Activated naive CD8-positive, alpha-beta T cell treated with anti-CD3 and anti-CD28 coated beads, Interleukin-2, amount 10 ng/mL, durations not matched to agents 7 days and 5 days (primary cell): ENCODE measurements at regions of chr11 and their contacts with region 1.

Region 1: DNA sequence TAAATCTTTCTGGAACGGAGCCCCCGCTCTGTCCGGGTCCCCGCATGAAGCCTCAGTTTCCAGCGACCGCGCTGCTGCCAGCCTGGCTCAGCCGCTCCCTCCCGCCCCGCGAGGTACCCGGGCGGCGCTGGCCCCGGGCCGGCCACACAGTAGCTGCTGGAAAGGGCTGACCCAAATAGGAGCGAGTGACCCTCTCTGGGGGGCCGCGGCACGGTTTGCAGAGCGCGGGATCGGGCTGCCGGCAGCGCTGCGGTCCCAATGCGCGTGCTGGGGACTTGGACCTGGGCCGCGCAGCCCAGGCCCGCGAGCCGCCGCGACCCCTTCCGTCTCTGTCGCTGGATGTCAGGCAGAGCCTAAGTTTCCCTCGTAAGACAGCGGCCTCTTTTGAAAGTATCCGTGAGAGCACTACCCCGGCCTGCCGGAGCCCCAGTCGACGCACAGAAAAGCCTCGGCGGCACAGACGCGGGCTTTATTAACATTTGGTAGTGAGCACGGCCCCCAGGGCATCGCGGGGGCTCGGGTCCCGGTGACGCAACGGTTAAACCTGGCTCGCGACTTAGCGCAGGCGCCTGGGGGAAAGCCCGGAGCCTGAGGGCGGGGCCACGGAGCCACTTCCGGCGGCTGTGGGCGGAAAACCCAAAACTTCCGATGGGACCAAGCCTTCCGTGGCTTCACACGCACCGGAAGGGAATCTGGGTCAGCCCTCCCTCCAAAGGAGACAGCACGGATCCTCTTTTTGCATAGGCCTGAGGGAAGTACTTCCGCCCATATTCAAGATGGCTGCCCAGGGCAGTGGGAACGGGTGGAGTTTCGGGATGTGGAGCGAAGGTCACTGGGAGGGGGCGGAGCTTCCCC is 14.9 kb downstream of the BAD start:
- DNase-seq: peak; percentile 99
- ATAC-seq: peak; percentile 69
- H3K4me3 Mint-ChIP-seq: peak overlapping the region; percentile 96
- H3K27ac Mint-ChIP-seq: peak overlapping the region; percentile 96
- H3K4me1 Mint-ChIP-seq: peaks cover 23% of the 10 kb centered on the region
- H3K27me3 Mint-ChIP-seq: no peaks in the 10 kb centered on the region

Region 2: DNA sequence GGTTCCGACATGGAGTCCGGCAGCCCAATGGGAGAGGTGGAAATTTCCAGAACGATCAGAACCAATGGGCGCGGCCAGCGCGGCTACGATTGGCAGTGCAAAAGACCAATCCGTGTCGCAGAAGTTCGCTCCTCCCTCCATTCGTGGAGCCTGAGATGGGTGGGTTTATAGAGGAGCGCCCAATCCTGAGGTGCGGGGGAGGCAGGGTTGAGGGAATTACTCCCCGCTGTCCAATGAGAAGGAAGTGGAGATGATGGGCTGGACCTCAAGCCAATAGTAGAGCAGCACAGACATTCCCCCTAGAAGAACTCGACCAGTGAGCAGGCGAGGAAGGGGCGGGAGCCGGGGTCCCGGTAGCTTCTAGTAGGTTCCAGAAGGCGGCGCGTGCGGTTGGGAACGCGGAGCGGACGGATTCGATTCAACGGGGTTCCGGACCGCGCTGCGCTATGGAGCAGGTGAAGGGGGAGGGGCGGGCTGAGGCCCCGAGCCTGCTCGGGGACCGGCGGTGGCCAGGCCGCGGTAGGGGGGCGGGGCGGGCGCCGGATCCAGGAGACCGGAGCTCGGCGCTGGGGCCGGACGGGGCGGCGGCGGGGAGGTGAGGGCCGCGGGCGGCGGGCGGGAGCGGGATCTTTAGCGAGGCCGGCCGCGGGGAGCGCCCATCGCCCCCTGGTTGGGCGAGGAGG is 83.7 kb before region 1 on chr11 and contains the start of gene STIP1:
- POLR2A ChIA-PET with region 1: interaction called, 38 read pairs
- DNase-seq: peak; percentile 95
- ATAC-seq: peak; percentile 92
- H3K4me3 Mint-ChIP-seq: peak within 1 kb of the TSS; percentile 99
- H3K27ac Mint-ChIP-seq: peak within 1 kb of the TSS; percentile 100
- H3K4me1 Mint-ChIP-seq: peaks cover 38% of the 10 kb centered on the region
- H3K27me3 Mint-ChIP-seq: no peaks in the 10 kb centered on the region
- total RNA-seq, gene STIP1: 218 to 219 TPM

Region 3: DNA sequence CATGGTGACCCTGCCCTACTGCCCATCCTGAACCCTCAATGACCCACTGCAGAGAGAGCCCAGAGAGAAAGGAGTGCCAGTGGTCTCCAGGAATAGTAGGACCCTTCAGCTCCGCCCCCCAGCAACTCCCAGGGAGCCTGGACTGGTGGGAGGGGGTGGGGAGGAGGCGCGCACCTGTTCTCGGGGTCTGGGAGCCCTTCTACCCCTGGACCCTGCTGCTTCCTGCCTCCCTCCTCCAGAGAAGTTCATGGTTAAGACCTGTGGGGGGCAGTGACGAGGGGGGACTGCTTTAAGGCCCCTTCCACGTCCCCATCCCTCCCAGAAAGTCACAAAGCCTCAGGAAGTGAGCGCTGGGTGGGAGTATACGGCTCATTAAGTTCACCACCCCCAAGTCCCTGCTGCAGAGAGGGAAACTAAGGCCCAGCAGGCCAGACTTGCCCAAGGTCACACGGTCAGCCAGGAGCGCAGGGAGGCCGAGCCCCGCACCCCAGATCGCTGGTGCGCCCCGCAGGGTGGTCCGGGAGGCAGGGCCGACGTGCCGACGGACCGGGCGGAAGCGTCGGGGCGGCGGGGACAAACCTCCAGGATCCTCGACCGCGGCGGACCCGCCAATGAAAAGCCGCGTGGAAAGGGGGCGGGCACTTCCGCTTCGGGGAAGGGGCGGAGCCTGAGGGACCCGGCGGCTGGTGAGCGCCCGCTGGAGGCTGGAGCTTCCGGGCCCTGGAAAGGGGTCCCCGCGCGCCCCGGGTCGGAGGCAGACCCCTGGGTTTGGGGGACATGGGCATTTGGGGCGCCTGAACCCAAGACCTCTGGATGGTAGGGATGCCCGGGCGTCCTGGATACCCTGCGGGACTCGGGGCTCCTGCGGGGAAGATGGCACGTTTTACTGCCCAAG is 43.7 kb before region 1 on chr11 and contains the starts of genes NUDT22 and TRPT1:
- POLR2A ChIA-PET with region 1: interaction called, 21 read pairs
- DNase-seq: peak; percentile 98
- ATAC-seq: peak; percentile 48
- H3K4me3 Mint-ChIP-seq: peak within 1 kb of the TSS; percentile 92
- H3K27ac Mint-ChIP-seq: peak within 1 kb of the TSS; percentile 88
- H3K4me1 Mint-ChIP-seq: peaks cover 24% of the 10 kb centered on the region
- H3K27me3 Mint-ChIP-seq: no peaks in the 10 kb centered on the region
- total RNA-seq, gene NUDT22: 102 to 103 TPM
- total RNA-seq, gene TRPT1: 45.0 to 47.8 TPM

Region 4: GRCh38 chr11:64246871-64247728 is 22.5 kb before region 1 on chr11 and contains the start of gene PPP1R14B:
- POLR2A ChIA-PET with region 1: interaction called, 55 read pairs
- DNase-seq: peak; percentile 88
- ATAC-seq: peak; percentile 51
- H3K4me3 Mint-ChIP-seq: peak within 1 kb of the TSS; percentile 93
- H3K27ac Mint-ChIP-seq: peak within 1 kb of the TSS; percentile 90
- H3K4me1 Mint-ChIP-seq: peaks cover 23% of the 10 kb centered on the region
- H3K27me3 Mint-ChIP-seq: peaks cover 2% of the 10 kb centered on the region
- total RNA-seq, gene PPP1R14B: 122 to 124 TPM

Region 5: DNA sequence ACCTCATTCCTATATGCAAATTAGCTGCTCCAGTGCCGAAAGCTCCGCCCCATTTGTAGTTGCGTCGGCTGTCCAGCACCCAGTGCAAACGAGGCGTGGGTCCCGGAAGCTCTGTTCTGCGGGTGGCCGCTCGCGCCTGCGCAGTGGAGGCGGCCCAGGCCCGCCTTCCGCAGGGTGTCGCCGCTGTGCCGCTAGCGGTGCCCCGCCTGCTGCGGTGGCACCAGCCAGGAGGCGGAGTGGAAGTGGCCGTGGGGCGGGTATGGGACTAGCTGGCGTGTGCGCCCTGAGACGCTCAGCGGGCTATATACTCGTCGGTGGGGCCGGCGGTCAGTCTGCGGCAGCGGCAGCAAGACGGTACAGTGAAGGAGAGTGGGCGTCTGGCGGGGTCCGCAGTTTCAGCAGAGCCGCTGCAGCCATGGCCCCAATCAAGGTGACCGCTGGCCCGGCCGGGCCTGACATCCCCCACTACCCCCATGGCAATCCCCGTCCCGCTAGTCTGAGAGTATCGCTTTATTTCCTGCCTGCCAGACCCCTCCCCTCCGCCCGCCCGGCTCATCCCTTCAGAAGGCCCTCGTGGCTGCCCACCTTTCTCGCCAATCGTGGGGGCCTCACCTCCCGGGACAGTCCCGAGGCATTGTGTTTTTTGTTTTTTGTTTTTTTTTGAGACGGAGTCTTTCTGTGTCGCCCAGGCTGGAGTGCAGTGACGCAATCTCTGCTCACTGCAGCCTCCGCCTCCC is 48.5 kb after region 1 on chr11 and contains the start of gene PRDX5:
- POLR2A ChIA-PET with region 1: interaction called, 13 read pairs
- DNase-seq: peak; percentile 97
- ATAC-seq: peak; percentile 82
- H3K4me3 Mint-ChIP-seq: peak within 1 kb of the TSS; percentile 87
- H3K27ac Mint-ChIP-seq: peak within 1 kb of the TSS; percentile 97
- H3K4me1 Mint-ChIP-seq: peaks cover 23% of the 10 kb centered on the region
- H3K27me3 Mint-ChIP-seq: no peaks in the 10 kb centered on the region
- total RNA-seq, gene PRDX5: 85.1 to 91.2 TPM

Region 6: DNA sequence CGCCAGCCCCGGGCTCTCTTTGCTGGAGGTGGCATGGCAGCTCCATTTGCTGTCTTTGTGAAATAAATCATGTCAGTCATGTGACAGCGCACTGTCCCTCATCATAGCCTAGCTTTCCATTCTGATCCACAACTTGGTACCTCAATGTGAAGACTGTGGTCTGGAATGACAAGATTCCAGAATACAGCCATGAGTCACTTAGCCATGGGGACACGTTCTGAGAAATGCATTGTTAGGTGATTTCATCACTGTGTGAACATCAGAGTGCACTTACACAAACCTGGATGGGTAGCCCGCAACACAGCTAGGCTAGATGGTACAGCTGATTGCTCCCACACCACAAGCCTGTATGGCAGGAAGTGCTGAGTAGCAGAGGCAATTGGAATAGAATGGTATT is 116.7 kb after region 1 on chr11:
- POLR2A ChIA-PET with region 1: no interaction called
- DNase-seq: no peak
- ATAC-seq: peak; percentile 45
- H3K4me3 Mint-ChIP-seq: no peak overlapping the region
- H3K27ac Mint-ChIP-seq: no peak overlapping the region
- H3K4me1 Mint-ChIP-seq: peaks cover 20% of the 10 kb centered on the region
- H3K27me3 Mint-ChIP-seq: peaks cover 20% of the 10 kb centered on the region

Region 7: DNA sequence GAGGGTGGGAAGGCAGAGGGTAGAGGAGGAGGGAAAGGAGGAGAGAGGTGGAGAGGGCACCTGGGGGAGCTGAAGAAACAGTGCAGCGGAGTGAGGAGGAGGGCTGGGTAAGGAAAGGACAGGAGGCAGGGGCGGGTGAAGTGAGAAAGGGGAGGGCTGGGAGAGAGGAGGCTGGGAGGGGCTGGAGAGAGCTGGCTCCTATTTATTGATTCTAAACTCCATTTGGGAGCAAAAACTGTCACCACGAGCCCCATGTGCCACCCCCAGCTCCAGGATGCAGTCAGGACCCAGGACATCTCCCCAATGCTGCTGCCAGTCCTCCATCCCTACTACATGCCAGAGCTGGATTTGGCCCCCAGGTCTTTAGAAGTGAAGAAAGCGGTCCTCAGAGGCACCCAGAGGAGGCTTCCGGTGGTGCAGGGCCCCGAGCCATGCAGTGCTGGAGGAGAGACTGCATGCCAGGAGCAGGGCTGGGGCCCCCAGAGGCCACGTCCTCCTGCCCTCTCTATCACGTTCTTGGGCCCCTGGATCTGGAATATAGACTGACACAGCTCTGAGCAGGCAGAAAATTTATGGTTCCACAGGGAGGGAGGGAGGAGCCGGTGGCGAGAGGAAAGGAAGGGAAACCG is 375.2 kb after region 1 on chr11:
- POLR2A ChIA-PET with region 1: no interaction called
- DNase-seq: no peak
- ATAC-seq: peak; percentile 57
- H3K4me3 Mint-ChIP-seq: no peak overlapping the region
- H3K27ac Mint-ChIP-seq: no peak overlapping the region
- H3K4me1 Mint-ChIP-seq: peaks cover 4% of the 10 kb centered on the region
- H3K27me3 Mint-ChIP-seq: peaks cover 29% of the 10 kb centered on the region